HCT116 (cell line): ENCODE measurements at regions of chr20 and their contacts with region 1.

Region 1: GRCh38 chr20:58980700-58981627 is at the start of gene NELFCD:
- DNase-seq: peak; percentile 51
- ATAC-seq: peak; percentile 91
- H3K4me3 ChIP-seq: peak within 1 kb of the TSS; percentile 88 to 94
- H3K27ac ChIP-seq: peak within 1 kb of the TSS; percentile 87
- H3K4me1 ChIP-seq: peaks cover 6 to 17% of the 10 kb centered on the region in 2 experiments
- H3K27me3 ChIP-seq: no peaks in the 10 kb centered on the region
- CTCF ChIP-seq: no peak
- POLR2A ChIP-seq: peak; percentile 51
- RAD21 ChIP-seq: no peak
- total RNA-seq, gene NELFCD: 88.2 TPM

Region 2: DNA sequence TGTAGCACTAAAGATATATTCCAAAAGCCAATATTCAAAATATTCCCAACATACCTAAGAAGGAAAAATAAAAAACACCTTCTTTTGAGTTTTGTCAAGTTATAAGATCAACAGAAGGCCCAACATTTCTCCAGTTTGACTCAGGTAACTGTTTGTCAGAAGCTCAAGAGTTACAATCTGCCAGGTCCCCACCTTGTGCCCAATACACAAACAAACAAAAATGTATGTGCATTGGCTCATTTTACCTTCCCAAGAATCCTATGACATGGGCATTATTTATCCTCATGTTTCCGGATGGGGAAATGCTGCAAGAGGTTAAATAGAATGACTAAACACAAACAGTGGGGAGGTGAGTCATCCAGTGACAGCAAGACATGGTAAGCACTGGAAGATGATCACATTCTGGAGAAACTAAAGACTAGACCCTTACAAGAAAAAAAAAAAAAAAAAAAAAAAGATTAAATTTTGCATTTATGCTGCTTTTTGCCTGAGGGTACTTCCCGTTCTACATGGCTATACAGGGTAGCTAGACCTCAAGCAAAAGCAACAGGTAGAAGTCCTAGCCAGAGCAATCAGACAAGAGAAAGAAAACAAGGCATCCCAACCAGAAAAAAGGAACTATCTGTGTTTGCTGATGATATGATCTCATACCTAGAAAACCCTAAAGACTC is 728.9 kb before region 1 on chr20:
- CTCF ChIA-PET with region 1: no interaction called
- POLR2A ChIA-PET with region 1: no interaction called
- RAD21 ChIA-PET with region 1: no interaction called
- intact Hi-C with region 1: no loop called
- DNase-seq: peak; percentile 80
- ATAC-seq: peak; percentile 87
- H3K4me3 ChIP-seq: no peak overlapping the region
- H3K27ac ChIP-seq: peak overlapping the region; percentile 27; the same call in 1 of the 2 replicates
- H3K4me1 ChIP-seq: peaks cover 14 to 19% of the 10 kb centered on the region in 2 experiments
- H3K27me3 ChIP-seq: no peaks in the 10 kb centered on the region
- CTCF ChIP-seq: 0 out of 6 replicates have a peak, but pooled peaks of 1 of the 3 experiments have one; percentile 2
- POLR2A ChIP-seq: no peak
- RAD21 ChIP-seq: peak; percentile 18; the same call in 1 of the 2 replicates

Region 3: GRCh38 chr20:58907399-58908137 is 73.4 kb before region 1 on chr20:
- CTCF ChIA-PET with region 1: no interaction called
- POLR2A ChIA-PET with region 1: no interaction called
- RAD21 ChIA-PET with region 1: no interaction called
- intact Hi-C with region 1: loop called (anchors 10 kb)
- DNase-seq: no peak
- ATAC-seq: peak; percentile 42; the same call in 1 of the 2 replicates
- H3K4me3 ChIP-seq: no peak overlapping the region
- H3K27ac ChIP-seq: peak overlapping the region; percentile 29; the same call in 1 of the 2 replicates
- H3K4me1 ChIP-seq: peaks cover 18 to 20% of the 10 kb centered on the region in 2 experiments
- H3K27me3 ChIP-seq: no peaks in the 10 kb centered on the region
- CTCF ChIP-seq: no peak
- POLR2A ChIP-seq: no peak
- RAD21 ChIP-seq: no peak